ENCODE measurements at regions of chr20 and their contacts with region 1.

Region 1: DNA sequence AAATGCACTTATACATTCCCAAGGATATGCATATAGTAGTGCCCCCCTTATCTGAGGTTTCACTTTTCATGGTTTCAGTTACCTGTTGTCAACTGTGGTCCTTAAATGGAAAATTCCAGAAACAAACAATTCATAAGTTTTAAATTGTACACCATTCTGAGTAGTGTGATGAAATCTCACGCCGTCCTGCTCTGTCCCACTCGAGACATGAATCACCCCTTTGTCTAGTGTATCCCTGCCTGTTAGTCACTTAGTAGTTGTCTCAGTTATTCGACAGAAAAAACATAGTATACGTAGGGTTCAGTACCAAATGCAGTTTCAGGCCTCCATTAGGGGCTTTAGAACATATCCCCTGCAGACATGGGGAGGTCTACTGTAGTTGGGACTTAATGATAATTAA is 57.0 kb downstream of the MAP1LC3A start:
- DNase-seq: peak; percentile 36
- ATAC-seq: peak; percentile 54; the same call in 1 of the 3 replicates
- H3K4me3 ChIP-seq: no peak overlapping the region
- H3K27ac ChIP-seq: no peak overlapping the region
- H3K4me1 ChIP-seq: peaks cover 28% of the 10 kb centered on the region
- H3K27me3 ChIP-seq: no peaks in the 10 kb centered on the region
- CTCF ChIP-seq: no peak
- EP300 ChIP-seq: no peak
- POLR2A ChIP-seq: no peak
- RAD21 ChIP-seq: no peak

Region 2: GRCh38 chr20:34604980-34605788 is 10.3 kb before region 1 on chr20:
- CTCF ChIA-PET with region 1: no interaction called
- POLR2A ChIA-PET with region 1: interaction called, 4 read pairs
- in situ Hi-C with region 1: no loop called
- intact Hi-C with region 1: loop called (anchors 1 kb)
- DNase-seq: no peak
- ATAC-seq: peak; percentile 67
- H3K4me3 ChIP-seq: no peak overlapping the region
- H3K27ac ChIP-seq: peak overlapping the region; percentile 17
- H3K4me1 ChIP-seq: peaks cover 35% of the 10 kb centered on the region
- H3K27me3 ChIP-seq: no peaks in the 10 kb centered on the region
- CTCF ChIP-seq: no peak
- EP300 ChIP-seq: 0 out of 4 replicates have a peak, but pooled peaks of 1 of the 2 experiments have one; percentile 5
- POLR2A ChIP-seq: no peak
- RAD21 ChIP-seq: no peak